ENCODE measurements at regions of chr17 and their contacts with region 1.

Region 1: DNA sequence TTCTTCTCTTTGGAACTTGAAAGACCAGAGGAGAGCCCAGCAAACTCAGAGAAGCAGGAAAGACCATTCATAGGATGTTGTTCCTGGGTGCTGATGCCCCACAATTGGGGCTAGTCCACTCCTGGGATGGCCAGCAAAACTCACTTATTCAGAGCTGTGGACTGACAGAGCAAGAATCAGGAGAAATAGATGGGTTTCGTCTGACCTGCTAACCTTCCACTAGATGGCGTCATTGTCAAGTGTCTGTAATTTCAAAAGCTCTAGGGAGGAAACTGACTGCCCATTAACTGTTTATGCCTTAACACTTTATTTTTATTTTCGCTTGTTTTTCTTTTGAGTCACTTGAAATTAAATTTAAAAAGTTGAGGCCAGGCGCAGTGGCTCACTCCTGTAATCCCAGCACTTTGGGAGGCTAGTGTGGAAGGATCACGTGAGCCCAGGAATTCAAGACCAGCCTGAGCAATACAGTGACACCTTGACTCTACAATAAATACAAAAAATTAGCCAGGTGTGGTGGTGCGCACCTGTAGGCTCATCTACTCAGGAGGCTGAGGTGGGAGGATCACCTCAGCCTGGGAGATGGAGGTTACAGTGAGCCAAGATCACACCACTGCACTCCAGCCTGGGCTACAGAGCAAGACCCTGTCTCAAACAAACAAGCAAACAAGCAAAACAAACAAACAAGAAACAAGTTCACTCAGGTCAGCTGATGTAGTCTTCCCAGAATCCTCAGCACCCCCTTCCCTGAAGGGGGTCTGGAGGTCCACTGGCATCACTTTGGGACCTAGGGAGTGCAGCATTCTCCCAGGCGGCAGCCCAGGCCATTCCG is 28.6 kb upstream of the MILR1 start:
- DNase-seq: peak; percentile 19
- ATAC-seq: peak; percentile 93
- H3K4me3 ChIP-seq: no peak overlapping the region
- H3K27ac ChIP-seq: no peak overlapping the region
- H3K4me1 ChIP-seq: no peaks in the 10 kb centered on the region
- H3K27me3 ChIP-seq: no peaks in the 10 kb centered on the region
- CTCF ChIP-seq: peak; percentile 77

Region 2: DNA sequence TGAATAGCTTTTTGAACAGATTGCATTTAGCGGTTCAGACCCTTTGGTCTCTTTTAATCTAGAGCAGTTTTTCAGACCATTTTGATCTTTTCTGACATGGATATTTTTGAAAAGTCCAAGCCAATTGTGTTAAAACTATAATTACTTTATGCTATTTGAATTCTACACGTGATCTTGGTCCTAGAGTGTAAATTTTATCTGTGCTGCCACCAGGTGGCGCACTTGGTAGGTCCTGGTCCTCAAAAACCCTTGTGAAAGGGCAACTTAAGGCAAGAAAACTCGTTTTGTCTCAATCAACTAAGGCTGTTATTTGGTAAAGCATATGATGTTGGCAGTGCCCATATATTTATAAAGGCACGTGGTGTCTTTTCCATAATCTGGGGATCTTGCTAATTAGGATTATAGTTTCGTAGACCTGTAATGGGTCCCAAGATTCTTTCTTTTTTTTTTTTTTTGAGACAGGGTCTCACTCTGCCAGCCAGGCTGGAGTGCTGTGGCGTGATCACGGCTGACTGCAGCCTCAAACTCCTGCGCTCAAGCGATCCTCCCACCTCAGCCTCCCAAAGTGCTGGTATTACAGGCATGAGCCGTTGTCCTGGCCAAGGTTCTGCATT is 113.4 kb before region 1 on chr17:
- intact Hi-C with region 1: loop called (anchors 5 kb)
- DNase-seq: peak; percentile 77
- ATAC-seq: peak; percentile 76
- H3K4me3 ChIP-seq: no peak overlapping the region
- H3K27ac ChIP-seq: no peak overlapping the region
- H3K4me1 ChIP-seq: peaks cover 25% of the 10 kb centered on the region
- H3K27me3 ChIP-seq: no peaks in the 10 kb centered on the region
- CTCF ChIP-seq: peak; percentile 88

Region 3: GRCh38 chr17:64496786-64497564 is 76.6 kb after region 1 on chr17 and contains the start of gene POLG2:
- intact Hi-C with region 1: loop called (anchors 10 kb)
- DNase-seq: peak; percentile 98
- ATAC-seq: peak; percentile 98
- H3K4me3 ChIP-seq: peak within 1 kb of the TSS; percentile 80
- H3K27ac ChIP-seq: peak within 1 kb of the TSS; percentile 76
- H3K4me1 ChIP-seq: peaks cover 48% of the 10 kb centered on the region
- H3K27me3 ChIP-seq: no peaks in the 10 kb centered on the region
- CTCF ChIP-seq: peak; percentile 39
- total RNA-seq, gene POLG2: 12.6 TPM